Common myeloid progenitor, CD34-positive (primary cell): ENCODE measurements at regions of chr11 and their contacts with region 1.

Region 1: DNA sequence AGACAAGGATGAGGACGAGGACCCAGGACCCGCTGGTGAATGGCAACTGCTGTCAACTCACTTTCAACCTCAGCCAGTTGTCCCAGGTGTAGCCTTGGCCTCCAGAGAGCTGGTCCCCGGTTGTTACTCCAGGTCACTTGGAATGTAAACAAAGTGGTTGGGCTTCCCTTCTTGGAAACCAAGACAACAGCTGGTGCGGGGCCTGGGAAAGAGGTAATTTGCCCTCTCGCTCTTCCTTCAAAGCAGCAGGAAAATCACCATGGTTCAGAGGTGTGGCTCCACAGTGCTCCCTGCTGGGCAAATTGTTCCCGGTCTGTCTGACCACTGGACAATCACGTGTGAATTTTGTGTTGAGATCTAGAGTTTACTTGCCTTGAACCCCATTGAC is 15.0 kb downstream of the SLC1A2 start:
- DNase-seq: no peak
- H3K4me3 ChIP-seq: peak overlapping the region in 1 of 7 experiments; percentile 52
- H3K27ac ChIP-seq: no peak overlapping the region
- H3K4me1 ChIP-seq: no peaks in the 10 kb centered on the region
- H3K27me3 ChIP-seq: peaks cover 0 to 5% (median 0%) of the 10 kb centered on the region in 5 experiments

Region 2: DNA sequence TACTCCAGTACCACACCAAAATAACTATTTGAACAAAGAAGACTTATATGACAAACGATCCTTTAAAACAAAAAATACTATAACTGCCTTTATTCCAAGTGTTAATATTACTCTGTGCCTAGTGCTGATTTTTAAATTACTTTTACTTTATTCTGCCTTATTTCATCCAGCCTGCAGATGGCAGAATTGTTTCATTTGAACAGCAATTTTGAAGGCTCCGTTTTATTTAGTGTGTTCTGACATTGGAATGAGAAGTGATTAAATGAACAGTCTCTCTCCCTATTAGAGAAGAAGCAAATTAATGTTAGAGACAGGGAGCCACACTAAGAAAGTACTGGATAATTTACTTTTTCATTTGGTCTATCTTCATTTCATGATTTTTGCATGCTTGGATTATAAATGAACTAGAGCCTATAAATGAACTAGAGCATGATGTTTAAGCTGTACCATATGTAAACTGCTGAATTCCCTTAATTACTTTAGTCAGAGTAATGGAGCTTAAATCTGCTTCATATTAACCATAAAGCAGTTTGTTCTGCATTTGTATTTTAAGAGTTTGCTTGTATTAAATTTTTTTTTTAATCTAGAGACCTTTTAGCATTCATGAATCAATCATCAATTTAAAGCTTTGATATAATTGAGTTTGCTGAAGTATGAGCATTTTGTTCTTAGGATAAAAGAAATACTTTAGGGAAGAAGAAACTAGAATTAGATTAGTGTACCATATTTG is 478.1 kb before region 1 on chr11:
- CTCF ChIA-PET with region 1: interaction called, 12 read pairs
- POLR2A ChIA-PET with region 1: no interaction called
- DNase-seq: peak; percentile 62 to 81 (median 72)
- H3K4me3 ChIP-seq: no peak overlapping the region
- H3K27ac ChIP-seq: no peak overlapping the region
- H3K4me1 ChIP-seq: peaks cover 0 to 18% (median 5%) of the 10 kb centered on the region in 4 experiments
- H3K27me3 ChIP-seq: no peaks in the 10 kb centered on the region

Region 3: DNA sequence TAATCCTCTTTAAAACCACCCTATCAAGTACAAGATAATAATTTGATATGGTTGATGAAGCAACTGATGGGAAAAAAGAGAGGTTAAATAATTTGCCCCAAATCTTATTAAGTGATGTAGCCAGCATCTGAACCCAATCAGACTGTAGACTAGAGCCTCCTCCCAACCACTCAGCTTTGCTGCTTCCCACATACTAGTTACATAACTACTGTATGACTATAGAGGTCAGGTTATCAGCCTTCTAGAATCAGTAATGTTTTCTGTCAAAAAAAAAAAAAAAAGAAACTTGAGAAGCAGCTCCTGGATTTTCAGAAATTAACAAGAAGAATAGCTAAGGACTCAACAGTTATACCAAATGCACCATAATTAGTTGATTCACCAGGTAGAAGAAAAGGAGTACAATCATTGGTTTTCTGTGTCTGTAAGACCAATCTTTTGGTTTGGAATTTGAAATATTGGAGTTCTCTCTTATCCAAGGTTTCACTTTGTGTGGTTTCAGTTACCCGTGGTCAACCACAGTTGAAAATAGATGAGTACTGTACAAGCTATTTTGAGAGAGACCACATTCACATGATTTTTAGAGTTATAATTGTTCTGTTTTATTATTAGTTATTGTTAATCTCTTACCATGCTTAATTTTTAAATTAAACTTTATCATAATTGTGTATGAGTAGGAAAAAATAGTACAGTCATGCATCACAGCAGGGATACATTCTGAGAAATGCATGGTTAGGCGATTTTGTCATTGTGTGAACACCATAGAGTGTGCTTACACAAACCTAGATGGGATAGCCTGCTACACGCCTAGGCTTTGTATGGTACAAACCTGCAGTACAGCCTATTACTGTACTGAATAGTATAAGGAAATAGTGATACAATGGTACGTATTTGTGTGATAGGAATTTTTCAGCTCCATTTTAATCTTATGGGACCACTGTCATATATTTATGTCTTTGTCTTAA is 415.8 kb before region 1 on chr11:
- CTCF ChIA-PET with region 1: no interaction called
- POLR2A ChIA-PET with region 1: no interaction called
- DNase-seq: peak in 2 of 3 donors; percentile 57 to 60
- H3K4me3 ChIP-seq: peak overlapping the region in 4 of 7 experiments; percentile 19 to 51 (median 32)
- H3K27ac ChIP-seq: peak overlapping the region; percentile 1 to 47
- H3K4me1 ChIP-seq: peaks cover 4 to 32% (median 18%) of the 10 kb centered on the region in 4 experiments
- H3K27me3 ChIP-seq: no peaks in the 10 kb centered on the region

Region 4: DNA sequence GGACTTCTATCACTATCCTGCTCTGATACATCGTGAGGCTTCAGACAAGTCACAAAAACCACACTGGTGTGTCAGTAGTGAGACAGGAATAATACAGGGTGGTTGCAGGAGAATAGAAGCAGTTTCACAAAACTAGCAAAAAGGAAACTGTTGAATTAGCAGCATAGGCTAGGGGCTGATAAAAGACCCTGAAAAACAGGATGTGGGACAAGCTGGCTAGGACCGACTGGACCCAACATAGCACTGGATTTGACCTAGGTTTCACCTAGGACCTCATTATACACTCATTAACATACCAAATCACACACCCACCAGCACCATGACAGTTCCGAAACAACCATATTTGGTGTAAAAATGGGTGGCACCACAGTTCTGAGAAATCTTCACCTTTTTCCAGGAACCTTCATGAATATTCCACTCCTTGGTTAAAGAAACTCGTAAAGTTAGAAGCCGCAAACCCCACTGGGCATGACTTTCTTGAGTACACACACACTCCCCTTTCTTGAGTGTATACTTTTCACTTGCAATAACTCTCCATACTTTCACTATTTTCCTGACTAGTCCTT is 61.3 kb before region 1 on chr11:
- CTCF ChIA-PET with region 1: no interaction called
- POLR2A ChIA-PET with region 1: no interaction called
- DNase-seq: peak; percentile 42 to 90 (median 85)
- H3K4me3 ChIP-seq: peak overlapping the region in 3 of 7 experiments; percentile 2 to 60 (median 12)
- H3K27ac ChIP-seq: no peak overlapping the region
- H3K4me1 ChIP-seq: peaks cover 5 to 39% (median 16%) of the 10 kb centered on the region in 4 experiments
- H3K27me3 ChIP-seq: no peaks in the 10 kb centered on the region

Region 5: GRCh38 chr11:35485656-35486322 is 81.4 kb after region 1 on chr11:
- CTCF ChIA-PET with region 1: no interaction called
- POLR2A ChIA-PET with region 1: no interaction called
- DNase-seq: peak; percentile 62 to 78 (median 70)
- H3K4me3 ChIP-seq: no peak overlapping the region
- H3K27ac ChIP-seq: no peak overlapping the region
- H3K4me1 ChIP-seq: no peaks in the 10 kb centered on the region
- H3K27me3 ChIP-seq: peaks cover 0 to 9% (median 0%) of the 10 kb centered on the region in 5 experiments